Activated CD4-positive, alpha-beta T cell treated with anti-CD3 and anti-CD28 coated beads for 36 hours (primary cell): ENCODE measurements at regions of chr6 and their contacts with region 1.

Region 1: GRCh38 chr6:99868074-99868702 is 125.8 kb downstream of the MCHR2 start:
- DNase-seq: peak; percentile 87
- ATAC-seq: peak; percentile 65
- H3K4me3 Mint-ChIP-seq: no peak overlapping the region
- H3K27ac Mint-ChIP-seq: no peak overlapping the region
- H3K4me1 Mint-ChIP-seq: peaks cover 4% of the 10 kb centered on the region
- H3K27me3 Mint-ChIP-seq: peaks cover 23% of the 10 kb centered on the region

Region 2: GRCh38 chr6:99882128-99882702 is 14.0 kb after region 1 on chr6:
- CTCF ChIA-PET with region 1: interaction called, 25 read pairs
- POLR2A ChIA-PET with region 1: no interaction called
- intact Hi-C with region 1: no loop called
- DNase-seq: no peak
- ATAC-seq: no peak
- H3K4me3 Mint-ChIP-seq: no peak overlapping the region
- H3K27ac Mint-ChIP-seq: no peak overlapping the region
- H3K4me1 Mint-ChIP-seq: peaks cover 2% of the 10 kb centered on the region
- H3K27me3 Mint-ChIP-seq: no peaks in the 10 kb centered on the region

Region 3: GRCh38 chr6:99905209-99906106 is 37.3 kb after region 1 on chr6:
- CTCF ChIA-PET with region 1: interaction called, 12 read pairs
- POLR2A ChIA-PET with region 1: no interaction called
- intact Hi-C with region 1: loop called in 1 of 2 experiments (anchors 1 kb)
- DNase-seq: no peak
- ATAC-seq: no peak
- H3K4me3 Mint-ChIP-seq: no peak overlapping the region
- H3K27ac Mint-ChIP-seq: no peak overlapping the region
- H3K4me1 Mint-ChIP-seq: no peaks in the 10 kb centered on the region
- H3K27me3 Mint-ChIP-seq: peaks cover 7% of the 10 kb centered on the region

Region 4: GRCh38 chr6:100001915-100002388 is 133.8 kb after region 1 on chr6:
- CTCF ChIA-PET with region 1: interaction called, 15 read pairs
- POLR2A ChIA-PET with region 1: no interaction called
- intact Hi-C with region 1: loop called in 1 of 2 experiments (anchors 5 kb)
- DNase-seq: peak; percentile 55
- ATAC-seq: peak; percentile 61
- H3K4me3 Mint-ChIP-seq: no peak overlapping the region
- H3K27ac Mint-ChIP-seq: no peak overlapping the region
- H3K4me1 Mint-ChIP-seq: no peaks in the 10 kb centered on the region
- H3K27me3 Mint-ChIP-seq: peaks cover 15% of the 10 kb centered on the region

Region 5: DNA sequence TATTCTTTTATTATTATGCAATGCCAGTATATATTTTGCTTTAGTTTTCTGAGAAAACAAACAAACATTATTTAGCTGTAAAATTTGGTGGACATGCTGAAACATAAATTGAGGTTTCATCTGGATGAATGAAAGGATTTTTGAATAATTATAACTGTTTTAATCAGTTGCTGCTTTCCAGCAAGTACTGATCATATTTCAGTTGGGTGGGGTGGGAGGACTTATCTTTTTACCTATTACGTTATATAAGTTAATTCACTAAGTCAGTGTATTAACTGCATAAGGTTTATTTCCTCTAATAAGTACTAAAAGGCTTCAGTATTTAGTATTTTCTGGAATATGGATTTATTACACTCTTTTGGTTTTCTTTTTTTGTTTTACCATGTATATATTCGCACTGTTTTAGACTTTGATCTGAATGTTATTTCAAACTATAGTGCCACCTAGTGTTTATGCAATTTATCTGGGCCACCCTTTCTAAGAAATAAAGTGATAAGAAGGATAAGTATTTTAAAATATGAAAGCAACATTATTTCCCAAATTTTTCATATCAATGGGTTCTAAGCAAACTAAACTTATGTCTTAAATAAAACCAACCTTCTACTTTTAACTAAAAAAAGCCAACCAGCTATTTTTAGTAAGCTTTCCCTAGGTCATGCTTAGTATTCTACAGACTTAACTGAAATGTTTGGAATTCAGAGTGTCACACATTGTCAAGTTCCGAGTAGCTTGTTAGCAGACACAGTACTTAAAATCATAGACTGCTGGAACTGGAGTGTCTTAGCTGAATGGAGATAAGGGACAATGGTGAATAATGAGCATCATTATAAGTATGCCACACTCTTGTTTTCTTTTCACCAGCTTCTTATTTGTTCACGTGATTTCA is 231.2 kb after region 1 on chr6:
- CTCF ChIA-PET with region 1: interaction called, 32 read pairs
- POLR2A ChIA-PET with region 1: no interaction called
- intact Hi-C with region 1: loop called (anchors 1 to 2 kb)
- DNase-seq: no peak
- ATAC-seq: no peak
- H3K4me3 Mint-ChIP-seq: no peak overlapping the region
- H3K27ac Mint-ChIP-seq: no peak overlapping the region
- H3K4me1 Mint-ChIP-seq: no peaks in the 10 kb centered on the region
- H3K27me3 Mint-ChIP-seq: peaks cover 2% of the 10 kb centered on the region

Region 6: DNA sequence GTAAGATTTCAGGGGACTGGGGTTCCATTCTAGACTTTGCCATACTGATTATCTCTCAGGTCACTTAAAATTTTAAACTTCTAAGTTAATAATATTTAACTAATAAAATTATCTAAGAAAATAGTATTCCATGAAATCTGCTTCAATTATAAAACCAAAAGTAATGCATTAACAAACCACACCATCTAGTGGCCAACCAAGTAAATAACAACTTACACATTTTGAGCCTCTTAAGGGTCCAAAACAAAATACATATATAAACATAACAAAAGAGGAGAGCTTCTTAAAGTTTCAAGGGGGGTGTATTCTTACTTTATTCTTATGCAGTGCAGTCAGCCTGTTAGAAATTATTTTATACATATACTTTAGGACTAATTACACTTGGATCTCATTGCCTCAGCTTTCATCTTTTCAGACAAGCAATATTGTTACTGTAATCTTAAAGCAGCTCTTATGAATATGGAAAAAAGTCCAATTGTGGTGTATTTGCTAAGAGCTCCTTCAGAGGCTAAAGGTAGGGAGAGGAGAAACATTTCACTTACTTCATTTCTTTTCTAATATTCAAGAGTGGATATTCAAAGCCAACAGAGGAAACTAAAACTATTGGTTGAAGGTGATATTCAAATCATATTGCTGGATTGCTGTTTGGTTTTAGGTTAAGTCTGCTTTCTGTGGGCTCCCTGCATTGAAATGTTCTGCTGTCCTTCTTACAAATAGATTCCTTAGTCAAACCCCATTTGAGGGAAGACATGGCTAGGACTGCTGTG is 796.3 kb after region 1 on chr6:
- CTCF ChIA-PET with region 1: interaction called, 3 read pairs
- POLR2A ChIA-PET with region 1: no interaction called
- intact Hi-C with region 1: loop called in 1 of 2 experiments (anchors 5 kb)
- DNase-seq: no peak
- ATAC-seq: no peak
- H3K4me3 Mint-ChIP-seq: no peak overlapping the region
- H3K27ac Mint-ChIP-seq: no peak overlapping the region
- H3K4me1 Mint-ChIP-seq: peaks cover 11% of the 10 kb centered on the region
- H3K27me3 Mint-ChIP-seq: no peaks in the 10 kb centered on the region